ENCODE measurements at regions of chr10 and their contacts with region 1.

Region 1: GRCh38 chr10:24344279-24344678 is 135.3 kb downstream of the KIAA1217 start:
- DNase-seq: peak; percentile 91
- H3K4me3 ChIP-seq: peak overlapping the region; percentile 8; the same call in 1 of the 2 replicates
- H3K27ac ChIP-seq: no peak overlapping the region
- H3K27me3 ChIP-seq: no peaks in the 10 kb centered on the region
- CTCF ChIP-seq: no peak

Region 2: GRCh38 chr10:24299578-24300260 is 44.6 kb before region 1 on chr10:
- CTCF ChIA-PET with region 1: no interaction called
- POLR2A ChIA-PET with region 1: no interaction called
- DNase-seq: peak; percentile 30
- H3K4me3 ChIP-seq: no peak overlapping the region
- H3K27ac ChIP-seq: peak overlapping the region; percentile 73
- H3K27me3 ChIP-seq: no peaks in the 10 kb centered on the region
- CTCF ChIP-seq: no peak

Region 3: GRCh38 chr10:24318517-24318916 is 25.8 kb before region 1 on chr10:
- CTCF ChIA-PET with region 1: interaction called, 16 read pairs
- POLR2A ChIA-PET with region 1: no interaction called
- DNase-seq: no peak
- H3K4me3 ChIP-seq: no peak overlapping the region
- H3K27ac ChIP-seq: no peak overlapping the region
- H3K27me3 ChIP-seq: no peaks in the 10 kb centered on the region
- CTCF ChIP-seq: no peak